H1 (cell line): ENCODE measurements at regions of chr11 and their contacts with region 1.

Region 1: DNA sequence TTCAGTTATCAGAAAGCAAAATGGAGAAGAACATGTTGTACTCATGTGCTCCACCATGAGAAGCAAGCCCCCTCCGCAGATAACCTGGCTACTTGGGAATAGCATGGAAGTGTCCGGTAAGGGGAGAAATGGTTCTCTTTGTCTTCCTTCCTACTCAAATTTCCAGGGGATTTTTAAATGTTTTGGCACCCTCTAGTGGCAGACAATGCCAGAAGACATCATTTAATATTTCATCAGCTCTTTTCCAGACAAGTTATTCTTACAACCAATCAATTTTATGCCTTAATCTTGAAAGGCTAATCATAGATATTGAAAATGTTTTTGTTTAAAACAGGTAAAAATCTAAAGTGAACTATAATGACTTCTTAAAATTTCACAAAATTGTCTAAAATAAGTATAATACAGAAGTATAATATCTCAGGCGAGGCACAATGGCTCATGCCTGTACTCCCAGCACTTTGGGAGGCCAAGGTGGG is 15.7 kb downstream of the CRTAM start:
- DNase-seq: peak in 1 of 2 experiments; percentile 53
- H3K4me3 ChIP-seq: no peak overlapping the region
- H3K27ac ChIP-seq: no peak overlapping the region
- H3K4me1 ChIP-seq: peaks cover 0 to 2% (median 0%) of the 10 kb centered on the region in 4 experiments; a peak in 4 of 7 replicates
- H3K27me3 ChIP-seq: no peaks in the 10 kb centered on the region
- CTCF ChIP-seq: peak in 2 of 3 experiments; percentile 59 to 69; a peak in 3 of 4 replicates
- EP300 ChIP-seq: no peak
- POLR2A ChIP-seq: no peak
- RAD21 ChIP-seq: peak; percentile 84 to 85

Region 2: GRCh38 chr11:122578168-122578825 is 275.7 kb before region 1 on chr11:
- CTCF ChIA-PET with region 1: interaction called, 13 read pairs
- POLR2A ChIA-PET with region 1: no interaction called
- DNase-seq: no peak
- H3K4me3 ChIP-seq: no peak overlapping the region
- H3K27ac ChIP-seq: no peak overlapping the region
- H3K4me1 ChIP-seq: peaks cover 0 to 3% (median 0%) of the 10 kb centered on the region in 4 experiments; a peak in 2 of 7 replicates
- H3K27me3 ChIP-seq: no peaks in the 10 kb centered on the region
- CTCF ChIP-seq: peak in 2 of 3 experiments; percentile 17 to 27; a peak in 2 of 4 replicates
- EP300 ChIP-seq: no peak
- POLR2A ChIP-seq: no peak
- RAD21 ChIP-seq: peak; percentile 34 to 44

Region 3: DNA sequence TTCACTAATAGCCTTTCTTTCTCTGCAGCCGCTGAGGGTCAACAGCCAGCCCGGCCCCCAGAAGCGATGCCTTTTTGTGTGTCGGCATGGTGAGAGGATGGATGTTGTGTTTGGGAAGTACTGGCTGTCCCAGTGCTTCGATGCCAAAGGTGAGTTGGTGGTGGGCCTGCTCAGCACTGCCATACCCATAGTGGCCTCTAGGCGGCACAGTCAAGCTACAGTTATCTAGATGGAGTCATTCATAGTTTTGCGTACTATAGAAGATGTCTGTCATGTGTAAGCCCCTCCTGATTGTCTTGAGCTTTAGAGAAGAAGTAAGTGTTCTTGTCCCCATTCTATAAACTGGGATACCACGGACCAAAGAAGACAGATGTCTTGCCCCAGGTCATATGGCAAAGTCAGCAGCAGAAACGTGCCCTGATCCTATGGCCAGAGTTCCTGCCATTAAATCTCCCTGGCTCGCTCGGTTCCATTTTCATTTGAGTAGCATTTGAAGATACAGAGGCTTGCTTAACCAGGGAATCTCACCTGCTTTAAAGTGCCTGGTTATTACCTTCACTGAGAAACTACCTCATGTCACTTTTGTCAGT is 57.8 kb before region 1 on chr11:
- CTCF ChIA-PET with region 1: interaction called, 145 read pairs
- POLR2A ChIA-PET with region 1: no interaction called
- DNase-seq: peak in 1 of 2 experiments; percentile 92
- H3K4me3 ChIP-seq: no peak overlapping the region
- H3K27ac ChIP-seq: no peak overlapping the region
- H3K4me1 ChIP-seq: no peaks in the 10 kb centered on the region
- H3K27me3 ChIP-seq: no peaks in the 10 kb centered on the region
- CTCF ChIP-seq: peak; percentile 80 to 97 (median 89)
- EP300 ChIP-seq: no peak
- POLR2A ChIP-seq: no peak
- RAD21 ChIP-seq: peak; percentile 83 to 85

Region 4: DNA sequence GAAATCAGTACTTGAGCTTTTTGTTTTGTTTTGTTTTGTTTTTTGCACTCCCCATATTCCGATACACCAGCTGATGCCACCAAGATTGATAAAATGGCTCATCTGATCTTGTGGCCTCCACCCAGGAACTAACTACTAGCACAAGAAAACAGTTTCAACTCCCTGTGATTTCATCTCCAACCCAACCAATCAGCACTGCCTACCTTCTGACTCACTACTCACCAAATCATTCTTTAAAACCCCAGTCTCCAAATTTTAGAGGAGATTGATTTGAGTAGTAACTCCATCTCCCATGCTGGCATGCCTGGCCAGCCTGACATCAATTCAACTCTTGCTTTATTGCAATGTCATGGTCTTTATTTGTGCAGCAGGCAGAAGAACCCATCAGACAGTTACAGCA is 31.8 kb before region 1 on chr11:
- CTCF ChIA-PET with region 1: interaction called, 13 read pairs
- POLR2A ChIA-PET with region 1: no interaction called
- DNase-seq: no peak
- H3K4me3 ChIP-seq: no peak overlapping the region
- H3K27ac ChIP-seq: no peak overlapping the region
- H3K4me1 ChIP-seq: no peaks in the 10 kb centered on the region
- H3K27me3 ChIP-seq: no peaks in the 10 kb centered on the region
- CTCF ChIP-seq: no peak
- EP300 ChIP-seq: no peak
- POLR2A ChIP-seq: no peak
- RAD21 ChIP-seq: no peak

Region 5: DNA sequence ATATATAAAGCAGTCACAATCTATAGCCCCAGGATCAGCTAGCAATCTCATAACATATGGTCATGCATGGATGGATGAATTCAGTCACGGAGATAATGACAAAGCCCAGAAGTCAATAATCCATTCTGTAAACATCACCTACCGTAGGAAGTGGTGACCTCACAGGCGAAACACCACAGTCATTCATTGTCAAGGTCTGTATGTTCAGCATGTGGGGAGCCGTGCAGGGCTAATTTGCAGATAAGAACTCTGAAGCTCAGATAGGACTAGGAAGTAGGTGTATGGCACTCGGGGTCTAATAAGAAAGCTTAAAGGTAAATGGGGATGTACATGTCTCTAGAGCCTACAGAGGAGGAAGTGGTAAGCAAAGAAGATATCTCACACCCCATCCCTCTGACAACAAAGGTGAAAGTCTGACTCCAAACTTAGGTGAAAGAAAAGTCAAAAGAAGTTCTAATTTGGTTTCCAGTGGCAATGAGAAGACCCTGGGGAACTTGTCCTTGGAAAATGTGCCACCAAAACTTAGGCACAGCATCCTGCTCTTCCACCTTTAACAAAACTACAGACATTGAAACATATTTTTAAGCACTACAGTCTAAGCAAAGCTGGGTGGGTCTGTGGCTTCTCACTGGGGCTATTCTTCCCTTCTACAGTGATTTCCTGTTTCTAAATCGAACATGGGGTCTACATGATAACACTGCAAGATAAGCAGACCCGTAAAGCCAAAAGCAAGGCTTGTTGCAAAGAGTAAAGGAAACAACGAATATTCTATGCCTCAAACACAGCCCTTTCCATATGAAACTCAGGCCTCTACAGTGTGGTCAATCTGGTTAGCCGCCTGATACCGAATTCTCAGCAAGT is 10.5 kb before region 1 on chr11:
- CTCF ChIA-PET with region 1: interaction called, 13 read pairs
- POLR2A ChIA-PET with region 1: interaction called, 3 read pairs
- DNase-seq: no peak
- H3K4me3 ChIP-seq: no peak overlapping the region
- H3K27ac ChIP-seq: no peak overlapping the region
- H3K4me1 ChIP-seq: peaks cover 0 to under 1% (median 0%) of the 10 kb centered on the region in 4 experiments; a peak in 1 of 7 replicates
- H3K27me3 ChIP-seq: no peaks in the 10 kb centered on the region
- CTCF ChIP-seq: no peak
- EP300 ChIP-seq: no peak
- POLR2A ChIP-seq: no peak
- RAD21 ChIP-seq: no peak

Region 6: GRCh38 chr11:122900587-122901202 is 46.7 kb after region 1 on chr11:
- CTCF ChIA-PET with region 1: no interaction called
- POLR2A ChIA-PET with region 1: no interaction called
- DNase-seq: no peak
- H3K4me3 ChIP-seq: no peak overlapping the region
- H3K27ac ChIP-seq: no peak overlapping the region
- H3K4me1 ChIP-seq: no peaks in the 10 kb centered on the region
- H3K27me3 ChIP-seq: no peaks in the 10 kb centered on the region
- CTCF ChIP-seq: no peak
- EP300 ChIP-seq: no peak
- POLR2A ChIP-seq: no peak
- RAD21 ChIP-seq: no peak